Panc1 (cell line): ENCODE measurements at regions of chr1 and their contacts with region 1.

Region 1: GRCh38 chr1:23657659-23658275 is 33.8 kb upstream of the RPL11 start:
- DNase-seq: no peak
- ATAC-seq: peak; percentile 90
- H3K4me3 ChIP-seq: no peak overlapping the region
- H3K27ac ChIP-seq: no peak overlapping the region
- H3K4me1 ChIP-seq: no peaks in the 10 kb centered on the region
- H3K27me3 ChIP-seq: no peaks in the 10 kb centered on the region
- CTCF ChIP-seq: peak; percentile 94

Region 2: GRCh38 chr1:23459338-23459757 is 198.4 kb before region 1 on chr1:
- CTCF ChIA-PET with region 1: no interaction called
- POLR2A ChIA-PET with region 1: interaction called, 11 read pairs
- in situ Hi-C with region 1: no loop called
- intact Hi-C with region 1: no loop called
- DNase-seq: no peak
- ATAC-seq: no peak
- H3K4me3 ChIP-seq: no peak overlapping the region
- H3K27ac ChIP-seq: no peak overlapping the region
- H3K4me1 ChIP-seq: no peaks in the 10 kb centered on the region
- H3K27me3 ChIP-seq: no peaks in the 10 kb centered on the region
- CTCF ChIP-seq: no peak

Region 3: DNA sequence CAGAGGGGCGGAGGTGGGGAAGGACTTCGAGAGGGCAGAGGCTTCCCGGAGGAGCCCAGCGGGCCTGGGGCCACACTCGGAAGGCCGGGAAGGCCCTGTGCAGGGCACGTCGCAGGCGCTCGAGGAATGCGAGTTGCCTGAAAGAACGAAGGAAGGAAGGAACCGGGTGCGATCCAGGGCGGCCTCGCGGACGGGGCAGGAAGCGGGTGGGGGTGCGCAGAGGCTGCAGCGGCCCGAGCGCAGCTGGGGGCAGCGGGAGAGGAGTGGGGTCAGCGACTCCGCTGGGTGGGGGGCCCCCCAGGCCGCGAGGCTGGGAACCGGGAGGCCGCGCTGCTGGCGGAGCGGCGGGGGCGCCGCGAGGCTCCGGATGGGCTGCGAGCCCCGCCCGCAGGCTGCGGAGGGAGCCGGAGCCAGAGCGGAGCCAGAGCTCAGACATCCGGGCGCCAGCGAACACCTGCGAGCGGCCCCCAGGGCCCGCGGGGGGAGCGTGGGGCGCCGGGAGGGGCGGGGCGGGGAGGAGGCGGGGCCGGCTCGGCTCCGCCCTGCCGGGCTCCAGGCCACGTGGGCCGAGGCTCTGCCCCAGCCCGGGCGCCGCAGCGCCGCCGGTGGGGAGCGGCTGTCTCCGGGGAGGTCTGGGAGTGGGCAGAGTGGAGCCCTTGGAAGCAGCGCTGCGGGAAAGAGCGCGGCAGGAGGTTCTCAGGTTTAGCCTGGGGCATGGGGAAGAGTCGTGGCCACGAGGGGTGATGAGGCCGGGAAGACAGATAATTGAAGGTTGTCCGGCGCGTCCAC is 103.1 kb before region 1 on chr1:
- CTCF ChIA-PET with region 1: no interaction called
- POLR2A ChIA-PET with region 1: no interaction called
- in situ Hi-C with region 1: no loop called
- intact Hi-C with region 1: no loop called
- DNase-seq: no peak
- ATAC-seq: peak; percentile 77
- H3K4me3 ChIP-seq: peak overlapping the region; percentile 43 to 52
- H3K27ac ChIP-seq: peak overlapping the region; percentile 88
- H3K4me1 ChIP-seq: peaks cover 38% of the 10 kb centered on the region
- H3K27me3 ChIP-seq: no peaks in the 10 kb centered on the region
- CTCF ChIP-seq: peak; percentile 70

Region 4: GRCh38 chr1:23742670-23743286 is 85.0 kb after region 1 on chr1:
- CTCF ChIA-PET with region 1: no interaction called
- POLR2A ChIA-PET with region 1: no interaction called
- in situ Hi-C with region 1: no loop called
- intact Hi-C with region 1: no loop called
- DNase-seq: no peak
- ATAC-seq: peak; percentile 69
- H3K4me3 ChIP-seq: peak overlapping the region; percentile 87 to 90
- H3K27ac ChIP-seq: peak overlapping the region; percentile 94
- H3K4me1 ChIP-seq: peaks cover 30% of the 10 kb centered on the region
- H3K27me3 ChIP-seq: no peaks in the 10 kb centered on the region
- CTCF ChIP-seq: no peak